Transverse colon (tissue), 4 donors: ENCODE measurements at regions of chr20 and their contacts with region 1.

Region 1: GRCh38 chr20:40689943-40690835 is 1.2 kb upstream of the MAFB start:
- DNase-seq: peak; percentile 83
- H3K4me3 ChIP-seq: peak overlapping the region; percentile 36 to 66 (median 42)
- H3K27ac ChIP-seq: peak overlapping the region; percentile 89 to 92 (median 90)
- H3K4me1 ChIP-seq: peaks cover 5 to 36% (median 24%) of the 10 kb centered on the region in 4 donors
- H3K27me3 ChIP-seq: peaks cover 88% of the 10 kb centered on the region
- CTCF ChIP-seq: peak; percentile 83 to 93 (median 86)
- EP300 ChIP-seq: no peak
- POLR2A ChIP-seq: no peak

Region 2: DNA sequence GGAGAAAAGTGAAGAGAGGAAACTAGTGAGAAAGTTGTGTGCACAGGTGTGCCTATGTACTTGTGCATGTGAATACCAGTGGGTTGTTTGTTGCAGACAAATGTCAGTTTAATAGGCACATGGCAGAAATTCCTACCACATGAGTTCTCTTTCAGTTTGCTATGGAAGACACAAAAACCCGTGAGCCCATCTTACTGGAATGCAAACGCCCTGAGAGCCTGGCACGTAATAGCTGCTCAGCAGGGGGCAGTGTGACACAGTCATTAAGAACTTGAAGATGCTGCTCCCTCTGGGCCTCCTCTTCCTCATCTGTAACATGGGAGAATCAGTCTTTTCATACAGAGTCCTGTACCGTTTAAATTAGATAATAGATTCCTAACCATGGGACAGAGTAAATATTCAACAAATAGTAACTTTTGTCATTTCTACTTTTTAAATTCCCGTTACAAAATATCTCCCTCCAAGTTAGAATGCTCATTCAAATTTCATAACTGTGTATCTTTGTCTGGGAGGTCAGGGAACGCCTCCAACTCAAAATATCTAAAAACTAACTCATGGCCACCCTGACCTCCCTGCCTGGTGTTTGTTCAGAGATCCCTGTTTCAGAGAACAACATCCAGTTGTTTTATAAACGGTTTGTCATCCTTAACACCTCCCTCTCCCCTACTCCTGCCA is 804.1 kb before region 1 on chr20:
- in situ Hi-C with region 1: loop called (anchors 10 to 25 kb)
- intact Hi-C with region 1: no loop called
- DNase-seq: peak; percentile 47
- H3K4me3 ChIP-seq: no peak overlapping the region
- H3K27ac ChIP-seq: no peak overlapping the region
- H3K4me1 ChIP-seq: no peaks in the 10 kb centered on the region
- H3K27me3 ChIP-seq: no peaks in the 10 kb centered on the region
- CTCF ChIP-seq: peak; percentile 34 to 46 (median 35)
- EP300 ChIP-seq: no peak
- POLR2A ChIP-seq: no peak

Region 3: DNA sequence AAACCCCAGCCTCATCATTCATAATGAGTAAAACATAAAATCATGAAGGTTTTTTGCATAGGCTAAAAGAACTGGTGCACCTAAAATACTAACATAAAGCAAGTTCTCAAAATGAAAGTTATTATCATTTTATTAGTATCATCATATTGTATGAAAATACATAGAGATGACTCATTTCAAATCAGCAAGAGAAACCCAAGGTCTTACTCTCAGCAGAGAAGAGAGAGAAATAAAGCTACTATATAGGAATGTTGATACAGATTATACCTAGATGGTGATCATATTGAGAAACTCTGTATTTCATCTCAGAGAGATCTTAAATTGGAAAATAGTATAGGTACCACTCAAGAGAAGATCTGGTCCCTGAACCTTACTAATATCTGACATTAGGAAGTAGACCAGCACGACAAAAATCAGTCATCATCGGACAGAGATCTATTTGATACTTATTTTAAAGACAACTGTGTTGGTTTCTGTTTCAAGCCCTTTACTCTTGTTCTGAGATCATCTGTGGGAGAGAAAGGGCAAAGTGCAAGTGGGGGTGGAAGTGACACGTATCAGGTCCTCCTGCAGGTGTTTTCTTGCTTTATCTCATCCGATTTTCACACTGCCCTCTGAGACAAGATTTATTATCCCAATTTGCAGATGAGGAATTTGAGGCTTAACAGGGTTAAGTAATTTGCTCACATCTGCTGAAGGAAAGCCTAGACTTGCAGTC is 533.4 kb before region 1 on chr20:
- in situ Hi-C with region 1: no loop called
- intact Hi-C with region 1: loop called (anchors 5 kb)
- DNase-seq: no peak
- H3K4me3 ChIP-seq: no peak overlapping the region
- H3K27ac ChIP-seq: no peak overlapping the region
- H3K4me1 ChIP-seq: no peaks in the 10 kb centered on the region
- H3K27me3 ChIP-seq: no peaks in the 10 kb centered on the region
- CTCF ChIP-seq: no peak
- EP300 ChIP-seq: no peak
- POLR2A ChIP-seq: no peak

Region 4: DNA sequence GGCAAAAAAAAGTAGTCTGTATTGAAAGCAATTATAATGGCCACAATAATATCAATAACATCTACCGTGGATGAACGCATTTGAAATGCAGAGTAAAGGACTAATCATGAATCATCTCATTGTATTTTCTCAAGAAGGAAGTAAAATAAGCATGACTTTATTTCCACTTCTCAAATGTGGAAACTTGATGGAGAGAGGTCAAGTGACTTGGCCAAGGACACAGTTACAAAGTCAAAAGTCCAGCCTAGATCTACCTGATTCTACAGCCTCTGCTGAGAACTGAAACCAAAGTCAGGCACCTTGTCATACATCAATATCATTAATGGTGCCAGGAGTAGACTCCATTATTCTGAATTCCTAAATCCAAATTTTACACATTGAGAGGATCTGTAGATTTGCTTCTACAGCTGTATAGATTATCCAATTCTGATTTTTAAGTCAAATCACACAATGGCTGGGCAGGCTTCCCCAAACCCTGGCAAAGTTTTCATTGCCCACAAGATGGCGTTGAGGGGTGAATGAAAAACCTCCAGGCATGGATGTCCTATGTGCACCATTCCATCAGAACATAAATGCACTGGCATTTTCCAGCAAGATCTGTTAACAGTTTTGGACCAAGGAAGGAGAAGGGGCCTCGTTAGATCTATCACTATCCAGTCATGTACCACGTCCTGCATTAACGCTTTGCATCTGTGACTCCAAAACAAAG is 424.2 kb before region 1 on chr20:
- in situ Hi-C with region 1: loop called in 2 of 4 experiments (anchors 10 kb)
- intact Hi-C with region 1: no loop called
- DNase-seq: peak; percentile 35
- H3K4me3 ChIP-seq: no peak overlapping the region
- H3K27ac ChIP-seq: no peak overlapping the region
- H3K4me1 ChIP-seq: peaks cover 0 to 4% (median 0%) of the 10 kb centered on the region in 4 donors
- H3K27me3 ChIP-seq: no peaks in the 10 kb centered on the region
- CTCF ChIP-seq: peak in 4 of 5 experiments; percentile 31 to 44 (median 43)
- EP300 ChIP-seq: no peak
- POLR2A ChIP-seq: no peak

Region 5: GRCh38 chr20:40728470-40728869 is 38.3 kb after region 1 on chr20:
- in situ Hi-C with region 1: no loop called
- intact Hi-C with region 1: loop called (anchors 1 kb)
- DNase-seq: no peak
- H3K4me3 ChIP-seq: no peak overlapping the region
- H3K27ac ChIP-seq: no peak overlapping the region
- H3K4me1 ChIP-seq: no peaks in the 10 kb centered on the region
- H3K27me3 ChIP-seq: peaks cover 8% of the 10 kb centered on the region
- CTCF ChIP-seq: no peak
- EP300 ChIP-seq: no peak
- POLR2A ChIP-seq: no peak

Region 6: DNA sequence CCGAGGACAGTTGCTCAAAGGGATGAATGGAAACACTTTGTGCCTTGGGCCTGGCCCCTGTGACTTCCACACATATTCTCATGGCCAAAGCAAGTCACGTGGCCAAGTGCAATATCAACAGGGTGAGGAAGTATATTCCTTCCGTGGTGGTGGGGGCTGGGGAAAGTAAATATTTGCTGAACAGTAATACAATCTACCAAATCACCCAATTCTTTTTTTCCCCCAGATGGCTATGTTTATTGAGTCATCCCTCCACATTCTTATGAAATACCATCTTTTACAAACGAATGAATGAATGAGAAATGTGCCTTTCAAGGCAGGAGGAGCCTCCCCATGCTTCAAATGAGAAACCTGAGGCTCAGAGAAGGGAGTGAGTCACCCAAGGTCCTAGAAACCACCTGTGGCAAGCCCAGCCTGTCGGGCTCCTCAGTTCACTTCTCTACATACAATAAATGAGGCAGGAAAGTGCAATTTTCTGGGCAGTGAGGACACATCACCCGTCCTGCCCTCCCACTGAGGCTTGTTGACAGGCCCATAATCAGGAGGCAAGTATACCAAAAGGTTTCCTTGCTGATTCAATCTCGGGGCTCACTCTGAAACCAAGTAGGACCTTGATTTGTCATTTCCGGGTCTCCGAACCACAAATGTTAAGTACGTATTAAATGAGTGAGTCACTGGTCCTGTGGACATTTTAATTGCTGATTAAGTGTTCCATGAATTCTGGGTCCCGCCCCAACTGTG is 313.1 kb after region 1 on chr20:
- in situ Hi-C with region 1: no loop called
- intact Hi-C with region 1: no loop called
- DNase-seq: peak; percentile 77
- H3K4me3 ChIP-seq: peak overlapping the region in 1 of 4 donors; percentile 9
- H3K27ac ChIP-seq: peak overlapping the region; percentile 78 to 91 (median 84)
- H3K4me1 ChIP-seq: peaks cover 18 to 47% (median 34%) of the 10 kb centered on the region in 4 donors
- H3K27me3 ChIP-seq: no peaks in the 10 kb centered on the region
- CTCF ChIP-seq: no peak
- EP300 ChIP-seq: peak; percentile 77
- POLR2A ChIP-seq: no peak